Ovary (tissue), 10 donors: ENCODE measurements at regions of chr5 and their contacts with region 1.

Region 1: DNA sequence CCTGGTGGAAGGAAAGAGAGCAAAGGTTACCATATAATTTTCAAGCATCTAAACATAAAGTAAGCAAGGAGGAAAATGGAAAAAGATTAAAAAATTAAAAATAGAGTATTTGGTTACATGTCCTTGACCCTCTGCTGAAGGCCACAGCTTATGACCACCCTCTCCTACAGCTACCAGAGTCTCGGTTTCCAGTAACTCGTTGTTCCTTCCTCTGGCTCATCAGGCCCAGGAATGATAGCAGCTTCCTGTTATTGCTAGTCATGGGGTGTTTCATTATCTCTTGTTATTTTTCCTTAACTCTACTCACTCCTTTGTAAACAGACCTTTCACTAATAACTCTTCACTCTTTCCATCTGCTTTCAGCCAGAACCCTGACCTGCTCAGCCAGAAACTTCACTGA is 102.2 kb downstream of the YTHDC2 start:
- DNase-seq: peak in 2 of 5 donors; percentile 25 to 42
- H3K4me3 ChIP-seq: no peak overlapping the region
- H3K27ac ChIP-seq: no peak overlapping the region
- H3K4me1 ChIP-seq: peaks cover 4% of the 10 kb centered on the region
- H3K27me3 ChIP-seq: no peaks in the 10 kb centered on the region
- CTCF ChIP-seq: no peak
- EP300 ChIP-seq: no peak
- POLR2A ChIP-seq: no peak

Region 2: GRCh38 chr5:114449860-114450421 is 834.2 kb after region 1 on chr5:
- intact Hi-C with region 1: loop called in 1 of 4 experiments (anchors 10 kb)
- DNase-seq: peak; percentile 40 to 74 (median 58)
- H3K4me3 ChIP-seq: no peak overlapping the region
- H3K27ac ChIP-seq: no peak overlapping the region
- H3K4me1 ChIP-seq: no peaks in the 10 kb centered on the region
- H3K27me3 ChIP-seq: no peaks in the 10 kb centered on the region
- CTCF ChIP-seq: peak in 2 of 3 donors; percentile 35 to 56
- EP300 ChIP-seq: no peak
- POLR2A ChIP-seq: no peak